Heart left ventricle (tissue), 16 donors: ENCODE measurements at regions of chr13 and their contacts with region 1.

Region 1: GRCh38 chr13:98142380-98143156 is at the start of gene FARP1:
- DNase-seq: peak; percentile 71 to 84 (median 83)
- ATAC-seq: peak; percentile 70 to 96 (median 93)
- H3K4me3 ChIP-seq: peak within 1 kb of the TSS; percentile 57 to 99 (median 68)
- H3K27ac ChIP-seq: peak within 1 kb of the TSS in 11 of 12 donors; percentile 46 to 79 (median 75)
- H3K4me1 ChIP-seq: peaks cover 0 to 30% (median 16%) of the 10 kb centered on the region in 12 donors
- H3K27me3 ChIP-seq: peaks cover 0 to 31% (median 0%) of the 10 kb centered on the region in 9 donors
- CTCF ChIP-seq: peak in 10 of 12 donors; percentile 22 to 65 (median 51)
- POLR2A ChIP-seq: no peak
- total RNA-seq, gene FARP1: 9.4 to 51.8 (median 28.0) TPM

Region 2: DNA sequence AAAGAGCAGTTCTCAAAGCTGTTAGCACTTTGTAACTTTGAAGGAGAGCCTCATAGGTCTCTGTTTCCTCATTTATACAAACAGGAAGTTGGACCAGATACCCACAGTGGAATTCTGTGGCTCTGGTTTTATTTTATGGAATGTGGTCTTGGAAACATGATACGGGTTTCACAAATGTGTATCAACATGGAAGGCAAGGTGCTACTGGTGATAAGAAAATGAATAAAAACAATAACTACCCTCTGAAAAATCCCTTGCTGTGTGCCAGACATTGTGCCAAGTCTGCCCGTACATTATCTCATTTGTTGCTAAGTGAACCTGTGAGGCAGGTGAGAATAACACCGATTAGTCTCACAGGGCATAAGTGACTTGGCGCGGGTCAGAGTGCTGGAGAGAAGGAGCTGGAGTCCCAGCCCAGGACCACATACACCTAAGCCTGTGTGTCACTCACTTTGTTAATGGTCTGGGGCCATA is 79.5 kb after region 1 on chr13:
- intact Hi-C with region 1: loop called in 2 of 10 experiments (anchors 10 kb)
- DNase-seq: no peak
- ATAC-seq: no peak
- H3K4me3 ChIP-seq: no peak overlapping the region
- H3K27ac ChIP-seq: no peak overlapping the region
- H3K4me1 ChIP-seq: peaks cover 0 to 31% (median 9%) of the 10 kb centered on the region in 12 donors
- H3K27me3 ChIP-seq: no peaks in the 10 kb centered on the region
- CTCF ChIP-seq: no peak
- POLR2A ChIP-seq: no peak

Region 3: DNA sequence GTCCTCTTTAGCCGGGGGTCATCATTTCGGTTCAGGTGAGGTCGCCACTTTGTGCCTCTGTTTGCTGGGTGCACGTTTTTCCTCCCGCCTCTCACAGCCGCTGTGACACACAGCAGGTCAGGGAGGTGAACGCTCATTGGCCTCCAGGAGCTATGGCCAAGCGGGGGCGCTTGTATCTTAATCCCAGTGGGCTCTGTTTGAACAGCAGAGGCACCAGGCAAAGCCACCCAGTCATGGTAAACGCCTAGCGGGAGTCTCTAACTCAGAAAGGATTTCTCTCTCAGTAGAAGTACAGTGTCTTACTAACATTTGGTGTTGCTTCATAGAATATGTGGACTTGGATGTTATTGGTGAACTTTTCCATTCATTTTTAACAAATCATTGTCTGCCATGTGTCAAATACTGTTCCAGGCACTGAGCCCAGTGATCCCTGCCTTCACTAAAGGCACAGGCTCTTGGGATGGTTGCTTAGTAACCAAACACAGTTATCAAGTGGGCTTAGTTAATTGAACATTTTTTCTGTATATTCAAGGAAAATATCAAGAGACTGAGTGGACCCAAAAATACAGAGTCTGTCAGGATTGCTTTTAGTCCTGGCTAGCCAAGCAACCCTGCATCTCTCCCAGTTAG is 247.6 kb after region 1 on chr13:
- intact Hi-C with region 1: loop called in 7 of 10 experiments (anchors 5 to 10 kb)
- DNase-seq: peak in 1 of 5 donors; percentile 21
- ATAC-seq: peak; percentile 25 to 67 (median 46)
- H3K4me3 ChIP-seq: no peak overlapping the region
- H3K27ac ChIP-seq: peak overlapping the region in 7 of 12 donors; percentile 23 to 72 (median 35)
- H3K4me1 ChIP-seq: peaks cover 0 to 31% (median 14%) of the 10 kb centered on the region in 12 donors
- H3K27me3 ChIP-seq: no peaks in the 10 kb centered on the region
- CTCF ChIP-seq: no peak
- POLR2A ChIP-seq: no peak

Region 4: DNA sequence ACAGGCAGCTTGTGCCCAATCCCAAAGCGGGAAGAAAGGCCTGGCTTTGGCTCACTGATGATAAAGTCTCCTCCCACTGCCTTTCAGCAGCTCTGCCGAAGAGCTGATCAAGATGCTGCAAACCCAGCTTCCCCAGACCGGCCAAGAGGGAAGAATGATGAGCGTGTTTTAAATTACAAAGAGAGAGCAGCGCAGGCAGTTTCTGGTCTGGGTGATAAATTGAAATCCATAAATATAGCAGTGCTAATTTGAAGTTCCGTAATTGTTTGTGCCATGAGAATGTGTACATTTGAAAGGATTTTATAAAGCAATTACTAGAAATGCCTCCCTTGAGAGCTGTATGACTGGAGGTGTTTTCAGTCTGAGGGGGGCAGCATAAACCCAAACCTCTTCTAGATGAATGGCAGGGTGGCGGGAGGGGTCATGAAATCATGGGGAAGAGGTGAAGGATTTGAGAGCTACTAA is 262.6 kb after region 1 on chr13:
- intact Hi-C with region 1: loop called in 1 of 10 experiments (anchors 10 kb)
- DNase-seq: no peak
- ATAC-seq: peak in 3 of 4 donors; percentile 45 to 60 (median 49)
- H3K4me3 ChIP-seq: no peak overlapping the region
- H3K27ac ChIP-seq: no peak overlapping the region
- H3K4me1 ChIP-seq: no peaks in the 10 kb centered on the region
- H3K27me3 ChIP-seq: no peaks in the 10 kb centered on the region
- CTCF ChIP-seq: no peak
- POLR2A ChIP-seq: no peak

Region 5: GRCh38 chr13:98445340-98446233 is 303.0 kb after region 1 on chr13:
- intact Hi-C with region 1: loop called in 1 of 10 experiments (anchors 5 kb)
- DNase-seq: peak; percentile 58 to 88 (median 67)
- ATAC-seq: peak; percentile 62 to 88 (median 80)
- H3K4me3 ChIP-seq: no peak overlapping the region
- H3K27ac ChIP-seq: peak overlapping the region in 4 of 12 donors; percentile 5 to 67 (median 16)
- H3K4me1 ChIP-seq: peaks cover 0 to 30% (median 17%) of the 10 kb centered on the region in 12 donors
- H3K27me3 ChIP-seq: no peaks in the 10 kb centered on the region
- CTCF ChIP-seq: peak; percentile 95 to 99 (median 98)
- POLR2A ChIP-seq: no peak

Region 6: DNA sequence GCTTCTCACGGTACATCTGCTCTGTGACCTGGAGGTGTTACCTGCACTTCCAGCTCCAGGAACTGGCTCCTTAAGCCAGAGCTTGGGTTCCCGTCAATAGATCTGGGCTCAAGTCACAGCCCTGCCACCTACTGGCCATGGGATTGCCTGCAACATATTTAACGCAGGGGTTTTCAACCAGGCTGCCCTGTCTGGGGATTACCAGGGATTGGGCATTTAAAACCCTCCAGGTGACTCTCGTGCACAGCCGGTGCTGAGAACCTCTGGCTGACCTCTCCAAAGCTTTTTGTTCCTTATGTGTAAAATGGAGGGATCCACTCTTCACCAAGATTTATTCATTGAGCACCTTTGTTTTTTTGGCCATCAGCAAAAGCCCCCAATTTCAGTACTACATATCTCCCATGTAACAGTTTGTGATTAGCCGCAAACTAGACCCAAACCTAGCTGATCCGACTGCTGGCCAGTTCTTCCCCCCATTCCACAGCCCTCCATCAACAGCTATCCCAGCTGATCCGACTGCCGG is 511.0 kb after region 1 on chr13:
- intact Hi-C with region 1: loop called in 1 of 10 experiments (anchors 10 kb)
- DNase-seq: peak; percentile 69 to 79 (median 73)
- ATAC-seq: peak; percentile 71 to 94 (median 88)
- H3K4me3 ChIP-seq: no peak overlapping the region
- H3K27ac ChIP-seq: no peak overlapping the region
- H3K4me1 ChIP-seq: peaks cover 0 to 13% (median 0%) of the 10 kb centered on the region in 12 donors
- H3K27me3 ChIP-seq: no peaks in the 10 kb centered on the region
- CTCF ChIP-seq: peak; percentile 82 to 93 (median 89)
- POLR2A ChIP-seq: no peak